ENCODE measurements at regions of chr22 and their contacts with region 1.

Region 1: DNA sequence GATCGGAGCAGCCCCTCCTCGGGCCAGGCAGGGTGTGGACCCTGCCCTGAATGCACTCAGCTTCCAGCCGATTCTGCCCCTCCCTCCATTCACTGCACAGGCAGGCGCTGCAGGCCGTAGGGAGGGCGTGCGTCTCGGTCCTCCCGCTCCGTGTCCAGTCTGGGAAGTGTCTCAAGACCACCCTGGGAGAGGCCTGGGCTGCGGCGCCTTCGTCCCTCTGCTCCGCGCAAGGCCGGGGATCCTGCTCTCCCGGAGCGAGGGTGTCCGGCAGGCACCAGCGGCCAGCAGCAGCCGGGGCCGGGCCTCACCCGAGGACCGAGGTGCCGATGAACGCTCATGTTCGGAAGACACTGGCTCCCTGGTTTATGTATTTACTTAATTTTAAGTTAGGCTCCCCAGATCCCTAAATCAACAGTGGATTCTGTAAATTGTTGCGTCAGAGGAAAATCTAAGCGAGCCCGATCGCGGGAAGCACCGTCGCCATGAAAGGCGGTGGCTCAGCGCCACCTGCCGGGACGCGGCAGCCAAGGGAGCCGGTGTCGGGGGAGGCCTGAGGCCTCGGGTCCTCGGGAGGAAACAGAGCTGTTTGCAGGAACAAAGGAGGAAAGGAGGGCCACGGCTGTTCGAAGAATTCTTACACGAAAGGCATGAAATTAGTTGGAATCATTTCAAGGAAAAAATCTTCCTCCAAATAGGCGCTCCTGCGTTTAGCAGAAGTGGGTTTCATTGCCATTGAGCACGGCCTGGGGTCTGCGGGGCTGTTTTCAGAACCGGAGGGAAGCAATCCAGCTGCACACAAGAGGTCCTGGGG is 195.3 kb downstream of the BRD1 start:
- DNase-seq: peak; percentile 82
- ATAC-seq: peak; percentile 85
- H3K4me3 Mint-ChIP-seq: peak overlapping the region; percentile 59
- H3K27ac Mint-ChIP-seq: no peak overlapping the region
- H3K4me1 Mint-ChIP-seq: peaks cover 4% of the 10 kb centered on the region; the same call in 1 of the 2 replicates
- H3K27me3 Mint-ChIP-seq: no peaks in the 10 kb centered on the region; the same call in 1 of the 2 replicates
- CTCF ChIP-seq: peak; percentile 62; the same call in 1 of the 2 replicates

Region 2: GRCh38 chr22:49381595-49382450 is 250.6 kb before region 1 on chr22:
- CTCF ChIA-PET with region 1: no interaction called
- POLR2A ChIA-PET with region 1: no interaction called
- DNase-seq: no peak
- ATAC-seq: no peak
- H3K4me3 Mint-ChIP-seq: no peak overlapping the region
- H3K27ac Mint-ChIP-seq: no peak overlapping the region
- H3K4me1 Mint-ChIP-seq: peaks cover 17% of the 10 kb centered on the region
- H3K27me3 Mint-ChIP-seq: no peaks in the 10 kb centered on the region
- CTCF ChIP-seq: no peak

Region 3: GRCh38 chr22:49429066-49429465 is 203.3 kb before region 1 on chr22:
- CTCF ChIA-PET with region 1: interaction called, 55 read pairs
- POLR2A ChIA-PET with region 1: no interaction called
- DNase-seq: no peak
- ATAC-seq: no peak; the same call in 1 of the 2 replicates
- H3K4me3 Mint-ChIP-seq: no peak overlapping the region
- H3K27ac Mint-ChIP-seq: no peak overlapping the region
- H3K4me1 Mint-ChIP-seq: no peaks in the 10 kb centered on the region
- H3K27me3 Mint-ChIP-seq: no peaks in the 10 kb centered on the region
- CTCF ChIP-seq: no peak

Region 4: DNA sequence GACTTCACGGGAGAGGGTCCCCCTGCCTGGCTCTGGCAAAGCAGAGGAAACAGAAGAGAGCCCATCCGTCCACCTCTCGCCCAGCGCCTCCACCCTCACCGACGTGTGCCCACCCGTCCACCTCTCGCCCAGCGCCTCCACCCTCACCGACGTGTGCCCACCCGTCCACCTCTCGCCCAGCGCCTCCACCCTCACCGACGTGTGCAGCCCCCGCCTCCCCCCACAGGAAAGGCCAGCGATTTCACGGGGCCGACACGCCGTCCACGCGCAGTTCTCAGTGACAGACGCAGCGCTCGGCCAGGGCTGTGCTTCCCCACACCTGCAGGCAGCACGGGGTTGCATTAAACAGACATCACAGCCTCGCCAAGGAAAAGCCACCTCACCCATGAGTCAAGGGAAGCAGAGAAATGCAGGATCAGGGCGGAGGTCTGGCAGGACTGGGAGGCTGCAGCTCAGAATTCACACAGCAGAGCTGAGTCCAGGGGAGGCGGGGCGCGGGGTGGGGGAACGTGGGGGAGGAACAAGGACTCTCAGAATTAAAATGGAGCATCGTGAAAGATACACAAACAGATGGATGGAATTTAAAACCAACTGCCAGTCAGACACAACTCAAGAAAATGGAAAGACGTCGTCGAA is 182.5 kb before region 1 on chr22:
- CTCF ChIA-PET with region 1: interaction called, 11 read pairs
- POLR2A ChIA-PET with region 1: no interaction called
- DNase-seq: no peak
- ATAC-seq: peak; percentile 76
- H3K4me3 Mint-ChIP-seq: peak overlapping the region; percentile 60
- H3K27ac Mint-ChIP-seq: peak overlapping the region; percentile 86
- H3K4me1 Mint-ChIP-seq: peaks cover 40% of the 10 kb centered on the region
- H3K27me3 Mint-ChIP-seq: peaks cover 8% of the 10 kb centered on the region; the same call in 1 of the 2 replicates
- CTCF ChIP-seq: no peak

Region 5: DNA sequence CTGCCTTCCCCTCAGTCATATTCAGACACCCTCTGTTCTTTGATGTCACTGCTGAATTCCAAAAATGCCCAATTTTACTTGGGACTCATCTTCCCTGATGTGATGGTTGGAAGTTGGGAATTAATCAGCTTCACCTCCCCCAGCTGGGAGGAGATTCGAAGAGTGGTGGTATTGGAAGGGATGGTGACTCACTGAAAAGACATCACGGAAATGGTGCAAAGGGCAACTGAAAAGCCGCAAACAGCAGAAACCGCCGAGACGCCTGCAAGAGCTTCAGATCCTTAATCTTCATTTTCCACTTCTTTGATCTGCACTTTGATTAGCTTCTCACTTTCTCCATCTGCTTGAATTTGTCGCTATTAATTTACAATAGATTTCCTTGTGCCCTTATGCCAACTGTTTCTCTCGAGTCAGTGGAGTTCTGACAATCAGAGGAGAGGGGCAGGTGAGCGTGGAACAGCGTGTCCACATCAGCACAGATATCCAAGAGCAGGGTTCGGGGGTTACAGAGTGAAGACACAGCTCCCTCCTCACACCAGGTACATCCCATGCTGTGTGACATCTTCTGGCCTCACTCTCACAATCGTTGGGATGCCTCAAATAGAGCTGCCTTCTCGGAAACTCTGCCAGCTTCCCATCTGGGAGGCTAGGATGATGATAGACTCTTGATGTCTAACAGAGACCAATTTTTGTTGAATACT is 130.1 kb before region 1 on chr22:
- CTCF ChIA-PET with region 1: no interaction called
- POLR2A ChIA-PET with region 1: no interaction called
- DNase-seq: no peak
- ATAC-seq: no peak
- H3K4me3 Mint-ChIP-seq: no peak overlapping the region
- H3K27ac Mint-ChIP-seq: no peak overlapping the region
- H3K4me1 Mint-ChIP-seq: no peaks in the 10 kb centered on the region
- H3K27me3 Mint-ChIP-seq: no peaks in the 10 kb centered on the region
- CTCF ChIP-seq: no peak

Region 6: DNA sequence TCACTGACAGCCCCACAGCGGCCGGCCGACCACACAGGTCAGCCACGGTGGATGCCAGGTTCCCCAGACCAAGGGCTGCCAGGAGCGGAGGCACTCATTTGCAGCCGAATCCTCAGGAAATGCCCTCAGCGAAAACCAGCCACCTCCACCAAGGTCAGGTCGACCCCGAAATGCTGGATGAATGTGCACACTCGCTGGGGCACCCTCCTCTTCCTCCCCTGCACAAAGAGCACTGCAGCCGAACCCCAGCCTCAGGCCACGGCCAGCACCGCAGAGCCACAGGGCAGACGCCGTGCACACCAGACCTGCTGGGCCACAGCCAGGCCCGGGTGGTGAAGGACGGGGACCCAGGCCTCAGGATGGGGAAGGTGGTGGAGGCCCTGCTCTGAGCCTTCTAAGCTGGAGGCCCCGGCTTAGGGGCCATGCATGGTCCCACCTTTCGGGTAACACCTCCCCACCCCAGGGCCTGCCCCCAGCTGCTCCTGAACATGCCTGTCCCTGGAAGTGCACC is 10.7 kb before region 1 on chr22:
- CTCF ChIA-PET with region 1: interaction called, 17 read pairs
- POLR2A ChIA-PET with region 1: no interaction called
- DNase-seq: peak; percentile 7
- ATAC-seq: no peak
- H3K4me3 Mint-ChIP-seq: no peak overlapping the region
- H3K27ac Mint-ChIP-seq: no peak overlapping the region
- H3K4me1 Mint-ChIP-seq: no peaks in the 10 kb centered on the region
- H3K27me3 Mint-ChIP-seq: peaks cover 2% of the 10 kb centered on the region; the same call in 1 of the 2 replicates
- CTCF ChIP-seq: no peak

Region 7: GRCh38 chr22:49655168-49655812 is 22.9 kb after region 1 on chr22:
- CTCF ChIA-PET with region 1: interaction called, 11 read pairs
- POLR2A ChIA-PET with region 1: no interaction called
- DNase-seq: no peak
- ATAC-seq: no peak
- H3K4me3 Mint-ChIP-seq: no peak overlapping the region
- H3K27ac Mint-ChIP-seq: no peak overlapping the region
- H3K4me1 Mint-ChIP-seq: peaks cover 34% of the 10 kb centered on the region
- H3K27me3 Mint-ChIP-seq: no peaks in the 10 kb centered on the region; the same call in 1 of the 2 replicates
- CTCF ChIP-seq: no peak

Region 8: GRCh38 chr22:49685686-49686085 is 53.3 kb after region 1 on chr22:
- CTCF ChIA-PET with region 1: no interaction called
- POLR2A ChIA-PET with region 1: no interaction called
- DNase-seq: no peak
- ATAC-seq: no peak
- H3K4me3 Mint-ChIP-seq: no peak overlapping the region
- H3K27ac Mint-ChIP-seq: no peak overlapping the region
- H3K4me1 Mint-ChIP-seq: no peaks in the 10 kb centered on the region
- H3K27me3 Mint-ChIP-seq: no peaks in the 10 kb centered on the region; the same call in 1 of the 2 replicates
- CTCF ChIP-seq: no peak

Region 9: GRCh38 chr22:49724893-49725474 is 92.6 kb after region 1 on chr22:
- CTCF ChIA-PET with region 1: interaction called, 16 read pairs
- POLR2A ChIA-PET with region 1: no interaction called
- DNase-seq: peak; percentile 85
- ATAC-seq: peak; percentile 97
- H3K4me3 Mint-ChIP-seq: no peak overlapping the region
- H3K27ac Mint-ChIP-seq: no peak overlapping the region
- H3K4me1 Mint-ChIP-seq: no peaks in the 10 kb centered on the region
- H3K27me3 Mint-ChIP-seq: peaks cover 32% of the 10 kb centered on the region
- CTCF ChIP-seq: peak; percentile 33; the same call in 1 of the 2 replicates